Left ventricle myocardium inferior (tissue), 1 donor: ENCODE measurements at regions of chr3 and their contacts with region 1.

Region 1: DNA sequence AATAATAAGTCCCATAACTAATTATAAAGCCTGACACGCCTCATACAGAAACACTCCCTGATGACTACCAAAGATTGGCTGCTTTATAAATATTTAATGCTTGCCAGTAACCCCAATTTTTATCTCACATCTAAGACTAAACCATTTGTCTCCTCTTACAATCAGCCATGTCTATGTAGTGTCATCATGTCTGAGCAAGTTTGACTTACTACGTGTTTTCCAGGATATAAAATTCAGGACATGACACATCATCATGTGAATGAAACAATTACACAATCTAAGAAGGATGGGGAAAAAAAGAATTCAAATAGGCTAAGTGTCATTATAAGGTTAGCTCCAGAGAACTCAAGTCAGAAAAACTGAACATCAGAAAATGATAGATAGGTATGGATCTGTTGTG is 208.7 kb downstream of the MECOM start:
- DNase-seq: no peak
- H3K4me3 ChIP-seq: no peak overlapping the region
- H3K27ac ChIP-seq: peak overlapping the region; percentile 57
- H3K4me1 ChIP-seq: peaks cover 21% of the 10 kb centered on the region
- H3K27me3 ChIP-seq: no peaks in the 10 kb centered on the region
- CTCF ChIP-seq: no peak

Region 2: GRCh38 chr3:169390271-169391230 is 64.3 kb before region 1 on chr3:
- intact Hi-C with region 1: loop called (anchors 5 kb)
- DNase-seq: no peak
- H3K4me3 ChIP-seq: no peak overlapping the region
- H3K27ac ChIP-seq: peak overlapping the region; percentile 87
- H3K4me1 ChIP-seq: peaks cover 31% of the 10 kb centered on the region
- H3K27me3 ChIP-seq: no peaks in the 10 kb centered on the region
- CTCF ChIP-seq: no peak